ENCODE measurements at regions of chr15 and their contacts with region 1.

Region 1: GRCh38 chr15:52331490-52332240 is 36.1 kb upstream of the MYO5C start:
- DNase-seq: peak; percentile 38
- H3K4me3 Mint-ChIP-seq: no peak overlapping the region
- H3K27ac Mint-ChIP-seq: no peak overlapping the region
- H3K4me1 Mint-ChIP-seq: peaks cover 20% of the 10 kb centered on the region
- H3K27me3 Mint-ChIP-seq: no peaks in the 10 kb centered on the region
- CTCF ChIP-seq: no peak

Region 2: DNA sequence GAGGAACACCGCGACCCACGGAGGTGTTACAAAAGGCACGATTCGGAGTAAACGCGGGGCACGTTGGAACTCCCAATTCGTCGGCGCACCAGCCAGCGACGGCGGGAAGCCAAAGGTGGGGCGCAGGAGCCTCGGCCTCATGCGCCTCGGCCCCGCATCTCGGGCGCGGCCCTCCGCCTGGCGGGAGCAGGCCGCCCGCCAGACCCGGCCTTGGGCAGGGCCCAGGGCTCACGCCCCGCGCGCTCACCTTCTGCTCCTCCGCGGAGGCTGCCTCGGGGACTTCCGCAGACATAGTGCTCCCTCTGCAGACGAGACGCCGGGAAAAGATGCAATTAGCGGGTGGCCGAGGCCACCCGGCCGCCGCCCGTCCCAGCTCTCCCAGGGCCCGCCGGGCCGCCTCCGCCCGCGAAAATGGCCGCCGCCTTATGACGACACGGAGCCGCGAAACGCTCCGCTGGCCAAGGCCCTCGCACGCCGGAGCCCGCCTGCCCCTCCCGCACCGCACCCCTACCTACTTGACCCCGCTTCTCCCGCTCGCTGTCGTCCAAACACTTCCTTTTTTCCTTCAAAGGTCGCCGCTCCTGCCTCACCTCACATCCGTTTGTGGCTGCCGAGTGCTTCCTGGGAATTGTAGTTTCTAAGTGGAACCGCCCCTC is 237.1 kb after region 1 on chr15 and contains the start of gene ARPP19:
- CTCF ChIA-PET with region 1: no interaction called
- intact Hi-C with region 1: loop called (anchors 5 kb)
- DNase-seq: peak; percentile 91
- H3K4me3 Mint-ChIP-seq: peak within 1 kb of the TSS; percentile 65
- H3K27ac Mint-ChIP-seq: peak within 1 kb of the TSS; percentile 92
- H3K4me1 Mint-ChIP-seq: peaks cover 9% of the 10 kb centered on the region
- H3K27me3 Mint-ChIP-seq: no peaks in the 10 kb centered on the region
- CTCF ChIP-seq: no peak
- total RNA-seq, gene ARPP19: 145 and 155 TPM in 2 replicates

Region 3: DNA sequence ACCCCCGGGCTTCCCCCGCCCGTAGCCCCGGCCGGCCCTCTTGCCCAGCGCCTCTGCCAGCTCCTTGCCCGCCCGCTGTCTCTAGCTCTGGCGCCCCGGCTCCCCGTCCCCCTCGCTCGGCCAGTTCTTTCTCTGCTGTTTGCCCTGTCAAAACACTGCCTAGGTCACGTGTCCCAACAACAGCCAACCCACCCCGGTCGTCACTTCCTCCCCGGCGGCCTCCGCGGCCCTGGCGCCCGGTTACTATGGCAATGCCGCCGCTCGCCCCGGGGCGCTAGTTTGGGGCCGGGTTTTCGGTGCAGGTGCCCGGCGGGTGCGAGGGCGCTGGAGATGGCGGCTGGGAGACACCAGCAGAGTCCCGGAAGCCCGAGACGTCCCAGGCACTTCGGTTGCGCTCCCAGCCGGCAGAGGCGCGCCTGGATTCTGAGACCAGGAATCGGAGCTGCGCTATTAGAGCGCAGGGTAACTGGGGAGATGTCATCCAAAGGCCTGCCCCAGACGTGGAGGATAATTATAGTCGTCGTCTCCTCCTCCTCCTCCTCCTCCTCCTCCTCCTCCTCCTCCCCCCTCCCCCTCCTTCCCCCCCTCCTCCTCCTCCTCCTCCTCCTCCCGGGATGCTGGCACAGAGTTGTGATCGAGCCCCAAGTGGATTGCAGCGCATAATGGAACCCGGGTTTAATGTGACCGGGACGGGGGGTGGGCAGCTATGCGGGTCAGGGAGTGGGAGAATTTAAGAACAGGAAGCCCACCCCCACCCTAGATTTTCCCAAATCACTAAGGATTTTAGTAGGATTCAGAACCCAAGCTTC is 347.8 kb after region 1 on chr15 and contains the start of gene ATOSA:
- CTCF ChIA-PET with region 1: no interaction called
- intact Hi-C with region 1: loop called (anchors 2 kb)
- DNase-seq: peak; percentile 90
- H3K4me3 Mint-ChIP-seq: peak within 1 kb of the TSS; percentile 100
- H3K27ac Mint-ChIP-seq: peak within 1 kb of the TSS; percentile 95
- H3K4me1 Mint-ChIP-seq: peaks cover 17% of the 10 kb centered on the region
- H3K27me3 Mint-ChIP-seq: no peaks in the 10 kb centered on the region
- CTCF ChIP-seq: no peak
- total RNA-seq, gene ATOSA: 21.8 and 22.2 TPM in 2 replicates

Region 4: DNA sequence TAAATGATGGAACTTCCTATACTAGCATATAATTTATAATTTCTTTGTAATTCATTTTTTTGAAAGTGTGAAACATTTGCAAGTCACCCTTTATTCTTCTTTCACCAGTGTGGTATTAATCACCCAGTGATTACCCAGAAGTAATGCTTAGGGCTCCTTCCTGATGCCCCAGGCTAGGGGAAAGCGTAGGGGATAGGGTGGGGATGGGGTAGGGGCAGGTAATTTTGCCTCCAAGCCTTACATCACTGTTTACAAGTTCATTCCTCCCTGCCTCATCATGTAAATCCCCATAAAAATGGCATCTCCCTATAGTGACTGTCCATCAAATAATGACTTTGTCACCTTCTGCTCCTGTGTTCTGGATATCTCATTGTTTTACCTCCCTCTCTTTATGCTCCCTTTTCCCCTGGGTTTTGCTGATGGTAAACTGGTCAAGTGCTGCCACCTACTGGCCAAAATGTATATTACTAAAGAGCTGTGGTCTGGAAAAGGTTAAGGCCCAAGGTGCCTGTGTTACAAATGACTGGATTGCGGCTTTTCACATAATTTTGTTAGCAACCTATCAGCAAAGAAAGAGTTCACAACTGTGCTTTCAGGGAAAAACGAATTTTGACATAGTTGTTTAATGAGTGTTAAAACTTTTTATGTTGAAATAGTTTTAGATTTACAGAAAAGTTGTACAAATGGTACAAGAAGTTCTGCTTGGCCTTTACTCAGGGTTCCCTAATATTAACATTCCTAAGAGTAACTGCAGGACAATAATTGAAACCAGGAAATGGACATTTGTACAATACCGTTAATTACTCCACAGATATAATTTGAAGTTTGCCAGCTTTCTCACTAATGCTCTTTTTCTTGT is 403.8 kb after region 1 on chr15:
- CTCF ChIA-PET with region 1: interaction called, 7 read pairs
- intact Hi-C with region 1: loop called (anchors 1 kb)
- DNase-seq: peak; percentile 78
- H3K4me3 Mint-ChIP-seq: no peak overlapping the region
- H3K27ac Mint-ChIP-seq: no peak overlapping the region
- H3K4me1 Mint-ChIP-seq: peaks cover 2% of the 10 kb centered on the region
- H3K27me3 Mint-ChIP-seq: no peaks in the 10 kb centered on the region
- CTCF ChIP-seq: no peak

Measured in Calu3 (cell line).